ENCODE measurements at regions of chr12 and their contacts with region 1.

Region 1: DNA sequence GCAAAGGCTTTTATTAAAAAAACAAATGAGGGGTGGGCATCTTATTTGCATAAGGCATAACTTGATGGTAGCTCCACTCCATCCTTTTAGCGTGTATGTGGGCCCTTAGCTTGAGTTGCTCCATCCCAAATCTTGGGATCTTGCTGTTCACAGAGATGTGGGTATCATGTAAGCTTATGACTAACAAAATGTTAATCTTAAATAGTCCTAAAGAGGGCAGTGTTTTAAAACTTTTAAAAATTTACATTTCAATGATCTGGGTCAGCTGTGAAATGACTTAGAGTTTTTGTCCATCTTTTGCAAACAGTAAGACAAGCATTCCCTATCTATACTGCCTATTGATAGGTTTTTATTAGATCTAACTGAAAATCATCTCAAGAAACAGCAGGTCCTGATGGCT is 86.0 kb downstream of the SLCO1A2 start:
- DNase-seq: no peak
- H3K4me3 ChIP-seq: no peak overlapping the region
- H3K27ac ChIP-seq: no peak overlapping the region
- H3K4me1 ChIP-seq: no peaks in the 10 kb centered on the region
- H3K27me3 ChIP-seq: no peaks in the 10 kb centered on the region
- CTCF ChIP-seq: peak in 1 of 2 donors; percentile 9

Region 2: DNA sequence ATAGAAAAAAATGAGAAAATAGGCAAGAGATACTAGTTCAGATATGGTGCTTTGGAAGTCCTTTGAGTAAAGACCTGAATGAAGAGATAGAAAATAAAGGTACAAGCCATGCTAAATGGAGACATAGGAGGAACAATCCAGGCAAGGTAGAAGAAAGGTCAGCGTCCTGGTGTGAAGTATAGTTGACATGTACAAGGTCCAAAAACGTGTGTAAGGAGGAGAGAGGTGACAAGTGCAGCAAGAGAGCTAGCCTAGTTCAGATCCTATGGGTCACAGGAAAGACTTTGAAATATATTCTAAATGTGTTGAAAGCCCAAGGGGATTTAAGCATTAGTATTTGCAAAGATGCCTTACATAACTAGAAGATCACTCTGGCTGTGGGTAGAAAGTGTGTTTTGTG is 29.5 kb before region 1 on chr12:
- CTCF ChIA-PET with region 1: no interaction called
- dilution Hi-C with region 1: loop called (anchors 5 kb)
- in situ Hi-C with region 1: no loop called
- intact Hi-C with region 1: no loop called
- DNase-seq: no peak
- H3K4me3 ChIP-seq: no peak overlapping the region
- H3K27ac ChIP-seq: no peak overlapping the region
- H3K4me1 ChIP-seq: no peaks in the 10 kb centered on the region
- H3K27me3 ChIP-seq: no peaks in the 10 kb centered on the region
- CTCF ChIP-seq: no peak

Measured in mammary epithelial cell (primary cell).